Transverse colon (tissue), 4 donors: ENCODE measurements at regions of chr2 and their contacts with region 1.

Region 1: DNA sequence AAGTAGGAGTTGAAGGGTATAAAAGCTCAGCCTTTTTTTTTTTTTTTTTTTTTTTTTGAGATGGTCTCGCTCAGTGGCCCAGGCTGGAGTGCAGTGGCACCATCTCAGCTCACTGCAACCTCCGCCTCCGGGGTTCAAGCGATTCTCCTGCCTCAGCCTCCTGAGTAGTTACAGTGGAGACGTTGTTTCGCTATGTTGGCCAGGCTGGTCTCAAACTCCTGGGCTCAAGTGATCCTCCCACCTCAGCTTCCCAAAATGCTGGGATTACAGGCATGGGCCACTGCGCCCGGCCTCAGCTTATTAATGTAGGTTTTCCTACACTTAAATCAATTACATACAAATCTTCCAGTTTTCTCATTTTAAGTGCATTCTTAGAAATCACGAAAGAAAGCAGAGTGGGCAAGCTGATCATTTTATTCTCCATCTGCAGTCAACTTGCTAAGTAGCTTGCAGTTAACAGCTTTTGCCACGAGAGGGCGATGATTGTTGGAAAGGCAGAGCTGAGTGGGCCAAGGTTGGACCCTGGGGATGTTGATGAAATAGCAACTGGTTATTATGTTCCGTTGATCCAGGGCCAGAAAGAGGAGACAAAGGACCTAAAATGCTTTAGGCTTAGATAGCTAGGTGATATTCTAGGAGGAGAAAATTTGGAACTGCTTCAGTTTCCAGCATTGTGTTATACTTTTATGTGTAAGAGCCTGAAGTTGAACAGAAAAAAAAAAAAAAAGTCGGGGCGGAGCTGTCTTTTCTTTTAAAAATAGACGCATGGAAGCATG is 234.4 kb upstream of the EPAS1 start:
- DNase-seq: peak; percentile 82
- H3K4me3 ChIP-seq: no peak overlapping the region
- H3K27ac ChIP-seq: no peak overlapping the region
- H3K4me1 ChIP-seq: peaks cover 0 to 6% (median 0%) of the 10 kb centered on the region in 4 donors
- H3K27me3 ChIP-seq: no peaks in the 10 kb centered on the region
- CTCF ChIP-seq: peak; percentile 80 to 91 (median 84)
- EP300 ChIP-seq: no peak
- POLR2A ChIP-seq: no peak

Region 2: GRCh38 chr2:46010925-46011490 is 51.8 kb before region 1 on chr2:
- in situ Hi-C with region 1: no loop called
- intact Hi-C with region 1: no loop called
- DNase-seq: no peak
- H3K4me3 ChIP-seq: no peak overlapping the region
- H3K27ac ChIP-seq: no peak overlapping the region
- H3K4me1 ChIP-seq: peaks cover 0 to 8% (median 4%) of the 10 kb centered on the region in 4 donors
- H3K27me3 ChIP-seq: no peaks in the 10 kb centered on the region
- CTCF ChIP-seq: peak; percentile 56 to 77 (median 64)
- EP300 ChIP-seq: no peak
- POLR2A ChIP-seq: no peak

Region 3: DNA sequence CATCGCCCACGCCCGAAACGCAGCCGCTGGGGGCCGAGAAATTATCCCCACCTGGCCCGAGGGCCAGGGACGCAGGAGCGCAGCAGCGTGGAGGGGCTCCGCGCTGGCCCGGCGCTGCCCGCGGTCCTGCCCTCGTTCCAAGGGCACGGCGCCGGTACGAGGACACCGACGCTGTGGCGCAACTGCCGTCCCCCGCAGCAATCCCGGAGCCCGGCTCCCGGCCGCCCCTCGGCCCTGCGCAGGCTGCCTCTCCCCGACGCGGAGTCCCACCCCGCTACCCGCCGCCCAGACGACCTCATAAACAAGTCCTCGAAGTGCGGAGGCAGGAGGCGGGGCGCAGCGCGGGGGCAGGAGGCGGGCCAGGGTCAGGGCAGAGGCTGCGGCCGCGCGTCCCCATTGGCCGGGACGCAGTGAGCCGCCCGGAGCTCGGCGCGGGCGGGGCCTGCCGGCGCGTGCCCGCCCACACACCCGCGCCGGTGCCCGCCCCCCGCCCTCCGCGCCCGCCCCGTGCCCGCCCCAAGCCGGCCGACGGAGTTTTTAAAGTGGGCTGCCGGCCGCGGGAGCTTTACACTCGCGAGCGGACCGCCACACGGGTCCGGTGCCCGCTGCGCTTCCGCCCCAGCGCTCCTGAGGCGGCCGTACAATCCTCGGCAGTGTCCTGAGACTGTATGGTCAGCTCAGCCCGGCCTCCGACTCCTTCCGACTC is 234.2 kb after region 1 on chr2 and contains the start of gene EPAS1:
- in situ Hi-C with region 1: loop called in 1 of 4 experiments (anchors 25 kb)
- intact Hi-C with region 1: no loop called
- DNase-seq: peak; percentile 96
- H3K4me3 ChIP-seq: peak within 1 kb of the TSS; percentile 51 to 86 (median 71)
- H3K27ac ChIP-seq: peak within 1 kb of the TSS; percentile 88 to 92 (median 90)
- H3K4me1 ChIP-seq: peaks cover 0 to 38% (median 23%) of the 10 kb centered on the region in 4 donors
- H3K27me3 ChIP-seq: no peaks in the 10 kb centered on the region
- CTCF ChIP-seq: peak in 1 of 5 experiments; percentile 0
- EP300 ChIP-seq: no peak
- POLR2A ChIP-seq: peak; percentile 87
- total RNA-seq, gene EPAS1: 102 to 260 (median 167) TPM

Region 4: GRCh38 chr2:46364797-46365457 is 302.1 kb after region 1 on chr2:
- in situ Hi-C with region 1: loop called in 1 of 4 experiments (anchors 25 kb)
- intact Hi-C with region 1: loop called (anchors 2 kb)
- DNase-seq: peak; percentile 37
- H3K4me3 ChIP-seq: no peak overlapping the region
- H3K27ac ChIP-seq: no peak overlapping the region
- H3K4me1 ChIP-seq: peaks cover 0 to 4% (median 0%) of the 10 kb centered on the region in 4 donors
- H3K27me3 ChIP-seq: no peaks in the 10 kb centered on the region
- CTCF ChIP-seq: peak; percentile 80 to 92 (median 85)
- EP300 ChIP-seq: no peak
- POLR2A ChIP-seq: no peak